ENCODE measurements at regions of chr17 and their contacts with region 1.

Region 1: GRCh38 chr17:58200017-58200633 is 7.6 kb downstream of the EPX start:
- DNase-seq: peak; percentile 89
- H3K4me3 ChIP-seq: peak overlapping the region in 1 of 2 experiments; percentile 11; a peak in 2 of 4 replicates
- H3K27ac ChIP-seq: no peak overlapping the region
- H3K4me1 ChIP-seq: peaks cover 0 to 4% of the 10 kb centered on the region in 2 experiments; a peak in 1 of 4 replicates
- H3K27me3 ChIP-seq: peaks cover 34% of the 10 kb centered on the region
- CTCF ChIP-seq: peak; percentile 76
- EP300 ChIP-seq: no peak
- RAD21 ChIP-seq: peak; percentile 61

Region 2: GRCh38 chr17:58105093-58105492 is 95.0 kb before region 1 on chr17:
- CTCF ChIA-PET with region 1: no interaction called
- POLR2A ChIA-PET with region 1: no interaction called
- DNase-seq: no peak
- H3K4me3 ChIP-seq: no peak overlapping the region
- H3K27ac ChIP-seq: no peak overlapping the region
- H3K4me1 ChIP-seq: no peaks in the 10 kb centered on the region
- H3K27me3 ChIP-seq: no peaks in the 10 kb centered on the region
- CTCF ChIP-seq: no peak
- EP300 ChIP-seq: no peak
- RAD21 ChIP-seq: no peak

Region 3: DNA sequence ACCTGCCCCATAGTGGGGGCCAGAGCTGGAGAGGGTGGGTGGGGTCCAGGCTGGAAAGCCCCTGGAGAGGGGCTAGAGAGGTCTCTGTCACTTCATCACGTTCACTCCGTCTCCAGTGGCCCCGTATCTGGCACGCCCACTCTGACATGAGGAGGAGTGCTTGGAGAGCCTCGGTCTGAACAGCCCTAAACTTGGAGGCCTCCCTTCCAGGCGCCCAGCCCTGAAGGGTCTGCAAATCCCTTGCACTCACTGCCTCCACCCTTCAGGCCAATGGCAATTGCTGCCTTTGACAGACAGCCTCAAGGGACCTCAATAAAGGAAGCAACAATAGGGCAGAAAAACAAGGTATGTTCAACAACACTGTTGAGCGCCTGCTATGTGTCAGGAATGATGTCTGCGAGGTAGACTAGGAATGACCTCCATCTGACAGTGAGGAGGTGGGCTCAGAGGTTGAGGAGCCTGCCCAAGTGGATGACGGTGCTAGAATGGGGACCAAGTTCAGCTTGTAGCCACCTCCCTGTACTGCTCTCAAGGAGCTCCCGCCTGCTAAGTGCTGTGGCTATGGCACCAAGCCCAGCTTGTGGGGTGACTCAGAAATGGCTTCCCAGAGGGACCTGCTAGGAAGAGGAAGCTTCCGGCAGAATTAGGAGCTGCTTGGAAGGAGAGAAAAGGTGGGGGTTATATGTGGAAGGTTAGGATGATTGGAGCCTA is 10.5 kb before region 1 on chr17:
- CTCF ChIA-PET with region 1: interaction called, 22 read pairs
- POLR2A ChIA-PET with region 1: interaction called, 3 read pairs
- DNase-seq: peak; percentile 30
- H3K4me3 ChIP-seq: no peak overlapping the region
- H3K27ac ChIP-seq: no peak overlapping the region
- H3K4me1 ChIP-seq: no peaks in the 10 kb centered on the region; a peak in 1 of 4 replicates
- H3K27me3 ChIP-seq: peaks cover 25% of the 10 kb centered on the region; the same call in 1 of the 2 replicates
- CTCF ChIP-seq: no peak
- EP300 ChIP-seq: no peak
- RAD21 ChIP-seq: no peak

Region 4: GRCh38 chr17:58210922-58211321 is 10.8 kb after region 1 on chr17:
- CTCF ChIA-PET with region 1: interaction called, 14 read pairs
- POLR2A ChIA-PET with region 1: no interaction called
- DNase-seq: no peak
- H3K4me3 ChIP-seq: no peak overlapping the region
- H3K27ac ChIP-seq: no peak overlapping the region
- H3K4me1 ChIP-seq: no peaks in the 10 kb centered on the region
- H3K27me3 ChIP-seq: no peaks in the 10 kb centered on the region
- CTCF ChIP-seq: peak; percentile 42
- EP300 ChIP-seq: no peak
- RAD21 ChIP-seq: no peak

Region 5: GRCh38 chr17:58219001-58219788 is 19.1 kb after region 1 on chr17 and contains the start of gene MKS1:
- CTCF ChIA-PET with region 1: interaction called, 27 read pairs
- POLR2A ChIA-PET with region 1: interaction called, 7 read pairs
- DNase-seq: peak; percentile 100
- H3K4me3 ChIP-seq: peak within 1 kb of the TSS; percentile 79 to 87
- H3K27ac ChIP-seq: peak within 1 kb of the TSS; percentile 48 to 66
- H3K4me1 ChIP-seq: peaks cover 2 to 10% of the 10 kb centered on the region in 2 experiments; a peak in 1 of 4 replicates
- H3K27me3 ChIP-seq: no peaks in the 10 kb centered on the region
- CTCF ChIP-seq: peak; percentile 61
- EP300 ChIP-seq: no peak
- RAD21 ChIP-seq: no peak
- polyA plus RNA-seq, gene MKS1: 28.5 and 32.8 TPM in 2 replicates

Region 6: GRCh38 chr17:58447039-58447975 is 247.2 kb after region 1 on chr17:
- CTCF ChIA-PET with region 1: interaction called, 17 read pairs
- POLR2A ChIA-PET with region 1: no interaction called
- DNase-seq: peak; percentile 78
- H3K4me3 ChIP-seq: peak overlapping the region in 1 of 2 experiments; percentile 31; a peak in 1 of 4 replicates
- H3K27ac ChIP-seq: no peak overlapping the region
- H3K4me1 ChIP-seq: no peaks in the 10 kb centered on the region
- H3K27me3 ChIP-seq: no peaks in the 10 kb centered on the region; the same call in 1 of the 2 replicates
- CTCF ChIP-seq: peak; percentile 88
- EP300 ChIP-seq: no peak
- RAD21 ChIP-seq: peak; percentile 98

Region 7: GRCh38 chr17:58666858-58667619 is 466.9 kb after region 1 on chr17:
- CTCF ChIA-PET with region 1: no interaction called
- POLR2A ChIA-PET with region 1: no interaction called
- DNase-seq: no peak
- H3K4me3 ChIP-seq: no peak overlapping the region
- H3K27ac ChIP-seq: no peak overlapping the region
- H3K4me1 ChIP-seq: no peaks in the 10 kb centered on the region; a peak in 1 of 4 replicates
- H3K27me3 ChIP-seq: no peaks in the 10 kb centered on the region
- CTCF ChIP-seq: no peak
- EP300 ChIP-seq: no peak
- RAD21 ChIP-seq: no peak

Measured in SK-N-SH (cell line).